Activated CD4-positive, alpha-beta memory T cell treated with anti-CD3 and anti-CD28 coated beads for 36 hours (primary cell): ENCODE measurements at regions of chr3 and their contacts with region 1.

Region 1: GRCh38 chr3:196207833-196208607 is 3.2 kb downstream of the ZDHHC19 start:
- DNase-seq: peak; percentile 90
- H3K4me3 Mint-ChIP-seq: peak overlapping the region; percentile 76
- H3K27ac Mint-ChIP-seq: peak overlapping the region; percentile 33
- H3K4me1 Mint-ChIP-seq: peaks cover 9% of the 10 kb centered on the region
- H3K27me3 Mint-ChIP-seq: no peaks in the 10 kb centered on the region

Region 2: DNA sequence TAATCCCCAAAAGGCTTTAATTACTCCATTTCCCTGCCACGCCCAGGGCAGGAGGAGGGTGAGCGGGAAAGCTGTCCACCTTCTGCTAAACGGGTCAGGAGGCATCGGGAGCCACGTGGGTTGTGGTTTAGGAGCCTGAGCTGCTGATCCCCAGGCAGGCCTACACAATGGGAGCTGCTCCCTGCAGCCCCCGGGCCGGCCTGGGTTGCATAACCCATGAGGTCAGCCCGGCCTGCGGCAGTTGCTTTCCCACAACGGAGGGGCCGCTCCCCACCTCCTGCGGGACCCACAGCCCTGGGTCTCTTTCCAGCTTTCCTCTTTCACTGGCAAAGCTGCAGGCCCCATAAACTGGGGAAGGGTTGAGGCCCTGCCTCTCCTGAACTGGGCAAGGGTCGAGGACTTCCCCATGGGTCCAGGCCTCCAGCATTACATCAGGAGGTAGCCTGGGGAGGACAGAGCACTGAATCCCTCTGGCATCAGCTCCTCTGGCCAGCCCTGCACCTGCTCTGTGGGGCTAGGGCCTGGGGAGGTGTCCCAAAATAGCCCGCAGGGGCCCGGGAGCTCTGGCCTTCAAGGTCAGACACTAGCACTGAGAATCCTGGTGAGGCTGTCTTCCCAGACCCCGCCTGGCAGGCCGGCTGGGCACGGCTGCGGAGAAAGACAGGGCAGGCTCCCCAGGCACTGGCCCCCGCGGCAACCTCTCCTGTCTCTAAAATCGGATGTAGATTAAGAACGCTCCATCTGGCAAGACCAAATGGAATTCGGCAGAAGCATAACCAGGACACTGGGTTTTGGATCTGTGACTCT is 44.1 kb before region 1 on chr3:
- CTCF ChIA-PET with region 1: no interaction called
- POLR2A ChIA-PET with region 1: no interaction called
- intact Hi-C with region 1: no loop called
- DNase-seq: no peak
- H3K4me3 Mint-ChIP-seq: no peak overlapping the region
- H3K27ac Mint-ChIP-seq: no peak overlapping the region
- H3K4me1 Mint-ChIP-seq: peaks cover 21% of the 10 kb centered on the region
- H3K27me3 Mint-ChIP-seq: no peaks in the 10 kb centered on the region

Region 3: GRCh38 chr3:196219194-196219978 is 11.4 kb after region 1 on chr3:
- CTCF ChIA-PET with region 1: no interaction called
- POLR2A ChIA-PET with region 1: no interaction called
- intact Hi-C with region 1: loop called (anchors 1 kb)
- DNase-seq: peak; percentile 83
- H3K4me3 Mint-ChIP-seq: peak overlapping the region; percentile 64
- H3K27ac Mint-ChIP-seq: peak overlapping the region; percentile 80
- H3K4me1 Mint-ChIP-seq: peaks cover 14% of the 10 kb centered on the region
- H3K27me3 Mint-ChIP-seq: no peaks in the 10 kb centered on the region

Region 4: GRCh38 chr3:196341137-196341536 is 133.1 kb after region 1 on chr3:
- CTCF ChIA-PET with region 1: no interaction called
- POLR2A ChIA-PET with region 1: no interaction called
- intact Hi-C with region 1: no loop called
- DNase-seq: no peak
- H3K4me3 Mint-ChIP-seq: no peak overlapping the region
- H3K27ac Mint-ChIP-seq: no peak overlapping the region
- H3K4me1 Mint-ChIP-seq: peaks cover 6% of the 10 kb centered on the region
- H3K27me3 Mint-ChIP-seq: no peaks in the 10 kb centered on the region